ENCODE measurements at regions of chr7 and their contacts with region 1.

Region 1: GRCh38 chr7:44797329-44798251 is 1.1 kb downstream of the PPIA start:
- DNase-seq: peak; percentile 90
- H3K4me3 ChIP-seq: peak overlapping the region; percentile 92 to 95 (median 95)
- H3K27ac ChIP-seq: peak overlapping the region; percentile 100
- H3K4me1 ChIP-seq: peaks cover 35% of the 10 kb centered on the region
- H3K27me3 ChIP-seq: no peaks in the 10 kb centered on the region
- CTCF ChIP-seq: peak; percentile 3 to 36

Region 2: DNA sequence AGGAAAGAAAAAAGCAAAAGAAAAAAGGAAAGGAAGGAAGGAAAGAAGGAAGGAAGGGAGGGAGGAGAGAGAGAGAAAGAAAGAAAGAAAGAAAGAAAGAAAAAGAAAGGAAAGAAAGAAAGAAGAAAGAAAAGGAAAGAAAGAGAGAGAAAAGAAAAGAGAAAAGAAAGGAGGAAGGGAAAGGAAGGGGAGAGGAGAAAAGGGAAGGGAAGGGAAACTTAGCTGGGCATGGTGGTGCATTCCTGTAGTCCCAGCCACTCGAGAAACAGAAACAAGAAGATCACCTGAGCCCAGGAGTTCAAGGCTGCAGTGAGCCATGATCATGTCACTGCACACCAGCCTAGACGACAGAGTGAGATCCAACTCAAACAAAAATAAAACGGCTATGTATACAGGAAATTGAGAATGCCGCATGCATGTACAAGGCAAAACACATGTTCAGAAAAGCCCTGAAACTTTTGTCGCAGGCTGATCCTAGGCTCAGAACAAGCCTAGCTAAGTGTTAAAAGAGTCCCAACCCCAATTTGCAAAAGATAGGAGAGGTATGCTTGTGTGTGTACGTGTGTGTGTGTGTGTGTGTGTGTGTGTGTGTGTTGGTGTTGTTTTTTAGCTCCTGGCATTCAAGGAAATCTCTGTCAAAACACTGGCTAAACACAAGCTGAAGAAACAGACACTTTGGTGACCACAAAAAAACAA is 249.9 kb before region 1 on chr7:
- CTCF ChIA-PET with region 1: no interaction called
- dilution Hi-C with region 1: no loop called
- in situ Hi-C with region 1: no loop called
- intact Hi-C with region 1: no loop called
- DNase-seq: no peak
- H3K4me3 ChIP-seq: no peak overlapping the region
- H3K27ac ChIP-seq: no peak overlapping the region
- H3K4me1 ChIP-seq: peaks cover 19% of the 10 kb centered on the region
- H3K27me3 ChIP-seq: no peaks in the 10 kb centered on the region
- CTCF ChIP-seq: no peak

Region 3: DNA sequence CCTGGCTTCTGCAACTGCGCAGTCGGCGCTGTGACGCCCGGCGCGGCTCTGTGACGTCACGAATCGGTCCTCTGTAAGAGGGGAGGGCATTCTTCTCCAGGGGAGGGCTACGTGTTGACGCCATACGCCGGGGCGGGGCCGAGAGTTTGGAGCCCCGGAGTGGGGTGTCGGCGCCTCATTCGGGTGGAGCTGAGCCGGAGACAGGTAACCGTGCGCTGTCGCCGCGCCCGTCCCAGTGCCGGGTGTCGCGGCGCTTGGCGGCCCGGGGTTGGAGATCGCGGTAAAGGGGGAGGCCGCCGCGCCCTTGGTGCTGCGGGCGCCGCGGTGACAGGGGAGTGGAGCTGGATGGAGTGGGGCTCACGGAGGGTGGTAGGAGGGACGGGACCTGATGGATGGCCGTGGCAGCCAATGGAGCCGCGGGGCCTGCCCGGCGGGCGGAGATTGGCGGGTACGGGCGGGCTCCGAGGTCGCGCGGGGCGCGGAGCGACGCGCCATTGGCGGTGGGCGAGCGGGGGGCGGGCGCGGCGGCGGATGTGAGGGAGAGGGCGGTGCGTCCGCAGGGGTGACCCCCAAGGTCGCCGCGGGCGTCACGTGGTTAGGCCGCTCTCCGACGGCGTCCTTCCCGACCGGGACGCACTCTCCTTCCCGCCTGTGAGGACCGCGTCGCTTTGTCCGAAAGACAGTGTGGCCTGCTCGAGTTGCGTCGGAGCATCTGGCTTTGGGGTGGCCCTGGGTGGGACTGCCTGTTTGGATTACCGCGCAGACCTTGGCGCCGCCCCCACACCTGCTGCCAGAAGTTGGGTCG is 190.9 kb before region 1 on chr7 and contains the start of gene OGDH:
- CTCF ChIA-PET with region 1: no interaction called
- dilution Hi-C with region 1: no loop called
- in situ Hi-C with region 1: no loop called
- intact Hi-C with region 1: loop called (anchors 1 kb)
- DNase-seq: peak; percentile 97
- H3K4me3 ChIP-seq: peak within 1 kb of the TSS; percentile 71 to 98 (median 82)
- H3K27ac ChIP-seq: peak within 1 kb of the TSS; percentile 72
- H3K4me1 ChIP-seq: peaks cover 9% of the 10 kb centered on the region
- H3K27me3 ChIP-seq: no peaks in the 10 kb centered on the region
- CTCF ChIP-seq: no peak
- total RNA-seq, gene OGDH: 82.4 to 96.9 TPM

Region 4: GRCh38 chr7:44678471-44679179 is 119.0 kb before region 1 on chr7:
- CTCF ChIA-PET with region 1: no interaction called
- dilution Hi-C with region 1: no loop called
- in situ Hi-C with region 1: no loop called
- intact Hi-C with region 1: loop called (anchors 5 kb)
- DNase-seq: peak; percentile 71
- H3K4me3 ChIP-seq: no peak overlapping the region
- H3K27ac ChIP-seq: peak overlapping the region; percentile 11
- H3K4me1 ChIP-seq: peaks cover 21% of the 10 kb centered on the region
- H3K27me3 ChIP-seq: no peaks in the 10 kb centered on the region
- CTCF ChIP-seq: no peak

Region 5: DNA sequence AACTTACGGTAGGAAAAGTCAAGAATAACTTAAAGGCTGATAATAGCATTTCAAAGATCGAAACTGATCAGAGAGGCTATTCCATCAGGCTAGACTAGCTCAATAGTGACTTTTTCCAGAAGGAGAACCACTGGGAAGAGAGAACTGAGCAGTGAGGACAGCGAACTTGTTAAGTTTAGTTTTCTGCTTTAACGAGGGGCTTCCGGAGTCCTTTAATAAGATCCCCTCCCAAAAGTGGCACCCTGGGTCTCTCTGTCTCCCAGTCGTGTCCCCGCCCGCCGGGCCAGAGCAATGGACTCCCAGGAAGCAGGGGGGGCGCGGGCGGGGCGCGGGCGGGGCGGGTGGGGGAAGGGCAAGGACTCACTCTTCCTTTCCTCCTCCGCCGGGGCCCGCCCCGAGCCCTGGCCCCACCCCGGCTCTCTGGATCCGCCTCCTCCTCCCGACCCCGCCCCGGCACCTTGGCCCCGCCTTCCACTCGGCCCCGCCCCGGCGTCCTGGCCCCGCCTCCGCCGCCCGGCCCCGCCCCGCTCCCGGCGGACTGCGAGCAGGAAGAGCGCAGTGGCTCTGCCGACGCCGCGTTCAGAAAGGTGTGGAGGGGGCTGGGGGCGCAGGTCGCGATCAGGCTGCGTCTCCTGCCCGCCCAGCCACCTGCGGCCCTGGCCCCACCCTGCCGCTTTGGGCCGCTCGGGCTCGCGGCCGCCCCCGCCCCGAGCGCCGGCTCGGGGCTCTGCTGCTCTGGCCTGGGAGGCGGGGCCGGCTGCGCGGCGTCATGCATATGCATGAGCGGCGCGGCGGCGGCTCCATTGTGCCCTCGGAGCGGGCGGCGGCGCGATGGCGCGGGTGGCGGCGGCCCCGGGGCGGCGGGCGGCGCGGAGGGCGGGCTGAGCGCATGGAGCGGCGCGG is 49.3 kb before region 1 on chr7 and contains the start of gene ZMIZ2:
- CTCF ChIA-PET with region 1: no interaction called
- dilution Hi-C with region 1: no loop called
- in situ Hi-C with region 1: no loop called
- intact Hi-C with region 1: loop called (anchors 1 kb)
- DNase-seq: peak; percentile 83
- H3K4me3 ChIP-seq: peak within 1 kb of the TSS; percentile 44 to 97 (median 91)
- H3K27ac ChIP-seq: peak within 1 kb of the TSS; percentile 66
- H3K4me1 ChIP-seq: peaks cover 27% of the 10 kb centered on the region
- H3K27me3 ChIP-seq: no peaks in the 10 kb centered on the region
- CTCF ChIP-seq: no peak
- total RNA-seq, gene ZMIZ2: 8.0 to 55.6 TPM

Region 6: DNA sequence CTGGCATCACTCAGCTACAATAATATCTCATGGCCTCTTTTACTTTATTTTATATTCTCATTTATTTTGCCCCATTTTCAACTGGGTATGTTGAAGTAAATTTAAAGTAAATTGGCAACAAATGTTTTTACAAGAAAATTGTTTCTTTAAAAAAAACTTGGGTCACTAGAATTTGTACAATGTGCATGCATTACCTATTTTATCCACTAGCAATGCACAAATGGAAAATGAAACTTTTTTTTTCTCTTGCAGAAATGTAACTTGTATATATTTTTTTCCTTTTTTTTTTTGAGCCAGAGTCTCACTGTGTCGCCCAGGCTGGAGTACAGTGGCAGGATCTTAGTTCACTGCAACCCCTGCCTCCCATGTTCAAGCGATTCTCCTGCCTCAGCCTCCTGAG is 60.6 kb after region 1 on chr7:
- CTCF ChIA-PET with region 1: interaction called, 20 read pairs
- dilution Hi-C with region 1: no loop called
- in situ Hi-C with region 1: no loop called
- intact Hi-C with region 1: no loop called
- DNase-seq: no peak
- H3K4me3 ChIP-seq: no peak overlapping the region
- H3K27ac ChIP-seq: no peak overlapping the region
- H3K4me1 ChIP-seq: peaks cover 4% of the 10 kb centered on the region
- H3K27me3 ChIP-seq: no peaks in the 10 kb centered on the region
- CTCF ChIP-seq: no peak